Colonic mucosa (tissue), 4 donors: ENCODE measurements at regions of chr10 and their contacts with region 1.

Region 1: GRCh38 chr10:30392564-30392990 is 41.4 kb upstream of the MAP3K8 start:
- DNase-seq: peak; percentile 80
- H3K4me3 ChIP-seq: no peak overlapping the region
- H3K27ac ChIP-seq: no peak overlapping the region
- H3K4me1 ChIP-seq: no peaks in the 10 kb centered on the region
- H3K27me3 ChIP-seq: no peaks in the 10 kb centered on the region
- CTCF ChIP-seq: peak; percentile 95

Region 2: DNA sequence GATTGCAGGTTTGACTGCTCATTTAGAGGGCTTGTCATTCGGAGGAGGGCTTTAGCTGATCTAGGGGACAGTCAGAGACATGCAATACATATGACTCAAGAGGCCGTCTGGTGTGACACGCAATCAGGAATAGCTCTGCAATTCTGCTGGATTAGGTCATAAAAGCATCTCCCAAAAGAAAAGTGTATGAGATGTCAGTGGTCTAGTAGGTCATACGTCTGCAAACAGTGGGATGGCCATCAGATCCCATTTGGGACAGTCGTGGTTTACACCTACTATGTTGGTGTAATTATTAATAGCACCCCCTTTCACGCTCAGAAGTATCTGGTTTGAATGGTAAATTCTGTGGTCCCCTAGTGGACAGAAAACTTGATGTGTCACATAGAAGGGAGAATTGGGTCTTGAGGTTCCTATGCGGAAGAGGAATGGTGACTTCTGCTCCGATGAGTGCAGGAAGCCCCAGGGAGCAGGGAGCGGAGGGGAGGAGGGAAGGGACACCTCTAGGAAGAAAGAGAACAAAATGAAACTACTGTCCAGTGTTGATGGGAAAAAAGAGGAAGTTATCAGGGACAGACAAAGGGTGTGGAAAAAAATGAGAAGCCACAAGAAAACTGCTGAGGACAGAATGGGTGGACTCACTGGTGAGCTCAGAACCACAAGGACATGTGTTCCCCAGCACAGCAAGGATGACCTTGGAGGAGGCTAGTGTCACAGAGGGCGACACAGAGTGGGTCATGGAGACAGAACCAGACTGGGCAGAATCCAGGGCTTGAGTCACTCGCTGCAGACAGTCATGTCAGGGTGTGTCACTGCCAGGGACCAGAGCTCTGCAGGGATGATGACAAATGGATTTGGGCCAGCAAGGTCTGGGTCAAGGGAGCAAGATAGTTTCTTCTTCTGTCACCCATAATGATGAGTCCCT is 101.3 kb after region 1 on chr10:
- intact Hi-C with region 1: no loop called
- DNase-seq: peak; percentile 19
- H3K4me3 ChIP-seq: no peak overlapping the region
- H3K27ac ChIP-seq: no peak overlapping the region
- H3K4me1 ChIP-seq: no peaks in the 10 kb centered on the region
- H3K27me3 ChIP-seq: no peaks in the 10 kb centered on the region
- CTCF ChIP-seq: no peak

Region 3: DNA sequence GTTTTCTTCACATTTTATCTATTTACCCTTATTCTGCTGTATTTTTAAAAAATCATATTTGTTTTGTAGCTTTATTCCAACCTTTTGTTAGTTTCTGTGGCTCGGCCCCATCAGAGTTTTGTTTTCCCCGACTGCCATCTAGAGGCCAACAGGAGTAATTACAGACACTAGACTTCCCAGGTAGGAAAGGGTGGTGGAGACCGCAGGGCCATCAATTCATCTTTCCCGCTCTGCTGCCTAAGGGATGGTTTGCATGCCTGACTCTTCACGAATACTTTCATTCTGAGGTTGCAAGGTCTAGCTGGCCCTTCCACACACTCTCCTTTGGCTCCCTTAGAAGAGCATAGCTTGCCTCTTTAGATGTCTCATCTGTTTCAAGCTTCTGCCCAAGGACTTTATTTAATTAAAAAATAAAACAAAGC is 198.7 kb after region 1 on chr10:
- intact Hi-C with region 1: loop called (anchors 2 kb)
- DNase-seq: peak; percentile 56
- H3K4me3 ChIP-seq: no peak overlapping the region
- H3K27ac ChIP-seq: no peak overlapping the region
- H3K4me1 ChIP-seq: peaks cover 4% of the 10 kb centered on the region
- H3K27me3 ChIP-seq: no peaks in the 10 kb centered on the region
- CTCF ChIP-seq: peak; percentile 73